BJ (cell line): ENCODE measurements at regions of chr6 and their contacts with region 1.

Region 1: GRCh38 chr6:44074439-44075136 is 52.7 kb downstream of the MRPL14 start:
- DNase-seq: no peak
- H3K4me3 ChIP-seq: no peak overlapping the region
- H3K27me3 ChIP-seq: no peaks in the 10 kb centered on the region
- CTCF ChIP-seq: peak; percentile 93

Region 2: GRCh38 chr6:42831237-42831636 is 1243.4 kb before region 1 on chr6:
- CTCF ChIA-PET with region 1: no interaction called
- POLR2A ChIA-PET with region 1: no interaction called
- DNase-seq: no peak
- H3K4me3 ChIP-seq: no peak overlapping the region
- H3K27me3 ChIP-seq: no peaks in the 10 kb centered on the region
- CTCF ChIP-seq: no peak

Region 3: DNA sequence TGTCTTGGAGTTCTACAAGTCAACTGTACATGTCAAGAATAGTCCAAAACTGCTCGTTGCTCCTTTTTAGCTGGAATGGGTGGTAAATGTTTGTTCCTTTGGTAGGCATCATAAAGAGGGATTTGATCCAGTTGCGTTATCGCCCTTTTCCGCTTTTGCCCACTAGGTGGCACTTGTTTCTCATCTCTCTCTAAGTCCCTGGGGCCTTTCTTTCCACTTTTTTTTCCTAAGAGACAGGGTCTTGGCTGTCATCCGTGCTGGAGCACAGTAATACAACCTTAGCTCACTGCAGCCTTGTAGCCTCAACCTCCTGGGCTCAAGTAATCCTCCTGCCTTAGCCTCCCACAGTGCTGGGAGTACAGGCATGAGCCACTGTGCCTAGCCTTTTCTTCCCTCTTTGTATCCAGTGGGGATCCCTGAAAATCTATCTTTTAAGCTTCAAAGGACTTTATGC is 466.3 kb before region 1 on chr6:
- CTCF ChIA-PET with region 1: interaction called, 17 read pairs
- POLR2A ChIA-PET with region 1: no interaction called
- DNase-seq: no peak
- H3K4me3 ChIP-seq: no peak overlapping the region
- H3K27me3 ChIP-seq: no peaks in the 10 kb centered on the region
- CTCF ChIP-seq: peak; percentile 85

Region 4: GRCh38 chr6:43723737-43724295 is 350.8 kb before region 1 on chr6:
- CTCF ChIA-PET with region 1: interaction called, 37 read pairs
- POLR2A ChIA-PET with region 1: no interaction called
- DNase-seq: no peak
- H3K4me3 ChIP-seq: no peak overlapping the region
- H3K27me3 ChIP-seq: peaks cover 7% of the 10 kb centered on the region
- CTCF ChIP-seq: peak; percentile 59

Region 5: DNA sequence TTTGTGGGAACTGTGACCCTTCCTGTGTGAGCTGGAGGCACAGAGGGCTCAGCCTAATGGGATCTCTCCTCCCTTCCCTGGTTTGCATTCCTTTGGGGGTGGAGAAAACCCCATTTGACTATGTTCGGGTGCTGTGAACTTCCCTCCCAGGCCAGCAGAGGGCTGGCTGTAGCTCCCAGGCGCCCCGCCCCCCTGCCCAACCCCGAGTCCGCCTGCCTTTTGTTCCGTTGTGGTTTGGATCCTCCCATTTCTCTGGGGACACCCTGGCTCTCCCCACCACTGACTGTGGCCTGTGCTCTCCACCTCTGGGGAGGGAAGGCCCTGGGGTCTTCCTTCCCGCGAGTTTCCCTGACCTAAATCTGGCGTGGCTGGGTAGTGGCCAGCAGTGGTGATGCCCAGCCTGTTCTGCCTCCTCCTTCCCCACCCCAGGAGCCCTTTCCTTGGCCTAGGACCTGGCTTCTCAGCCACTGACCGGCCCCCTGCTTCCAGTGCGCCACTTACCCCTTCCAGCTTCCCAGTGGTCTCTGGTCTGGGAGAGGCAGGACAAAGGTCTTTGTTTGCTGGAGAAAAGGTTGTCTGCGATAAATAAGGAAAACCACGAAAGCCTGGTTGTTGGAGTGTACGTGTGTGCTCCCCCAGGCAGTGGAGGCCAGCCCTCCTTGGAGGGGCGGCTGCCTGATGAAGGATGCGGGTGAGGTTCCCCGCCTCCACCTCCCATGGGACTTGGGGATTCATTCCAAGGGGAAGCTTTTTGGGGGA is 299.6 kb before region 1 on chr6:
- CTCF ChIA-PET with region 1: interaction called, 338 read pairs
- POLR2A ChIA-PET with region 1: interaction called, 9 read pairs
- DNase-seq: no peak
- H3K4me3 ChIP-seq: peak overlapping the region; percentile 94
- H3K27me3 ChIP-seq: no peaks in the 10 kb centered on the region
- CTCF ChIP-seq: peak; percentile 97

Region 6: GRCh38 chr6:43990627-43991619 is 83.7 kb before region 1 on chr6:
- CTCF ChIA-PET with region 1: interaction called, 20 read pairs
- POLR2A ChIA-PET with region 1: no interaction called
- DNase-seq: no peak
- H3K4me3 ChIP-seq: no peak overlapping the region
- H3K27me3 ChIP-seq: no peaks in the 10 kb centered on the region
- CTCF ChIP-seq: no peak

Region 7: GRCh38 chr6:44010411-44011349 is 63.9 kb before region 1 on chr6:
- CTCF ChIA-PET with region 1: interaction called, 27 read pairs
- POLR2A ChIA-PET with region 1: no interaction called
- DNase-seq: peak; percentile 78
- H3K4me3 ChIP-seq: no peak overlapping the region
- H3K27me3 ChIP-seq: no peaks in the 10 kb centered on the region
- CTCF ChIP-seq: no peak

Region 8: DNA sequence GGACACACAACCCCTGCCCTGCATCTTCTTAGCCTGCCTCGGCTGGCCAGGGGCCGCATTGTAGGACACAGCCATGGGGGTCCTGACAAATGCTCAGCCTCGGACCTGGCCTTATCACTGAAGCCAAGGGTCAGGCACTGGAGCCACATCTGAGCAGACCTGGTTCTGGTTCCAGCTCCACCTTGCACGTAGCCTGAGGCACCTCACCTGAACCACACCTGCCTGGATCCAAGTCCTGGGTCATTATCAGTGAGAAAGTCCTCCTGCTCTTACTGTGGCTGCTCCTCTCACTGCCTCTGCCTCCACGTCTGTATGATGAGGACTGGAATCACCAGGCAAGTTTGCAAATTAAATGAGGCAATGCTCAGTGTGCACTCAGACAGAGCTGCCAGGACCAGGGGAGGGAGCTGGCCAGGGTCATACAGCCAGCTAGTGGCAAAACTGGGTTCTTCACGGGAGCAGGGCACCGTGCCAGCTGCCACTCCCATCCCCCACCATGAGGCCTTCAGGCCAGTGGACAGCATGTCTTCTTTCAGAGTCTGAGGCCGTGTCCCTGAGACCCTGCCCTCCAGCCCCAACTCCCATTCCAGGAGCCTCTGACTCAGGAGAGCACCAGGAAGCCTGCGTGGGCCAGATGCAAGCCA is 12.5 kb after region 1 on chr6:
- CTCF ChIA-PET with region 1: interaction called, 13 read pairs
- POLR2A ChIA-PET with region 1: no interaction called
- DNase-seq: no peak
- H3K4me3 ChIP-seq: no peak overlapping the region
- H3K27me3 ChIP-seq: no peaks in the 10 kb centered on the region
- CTCF ChIP-seq: no peak

Region 9: DNA sequence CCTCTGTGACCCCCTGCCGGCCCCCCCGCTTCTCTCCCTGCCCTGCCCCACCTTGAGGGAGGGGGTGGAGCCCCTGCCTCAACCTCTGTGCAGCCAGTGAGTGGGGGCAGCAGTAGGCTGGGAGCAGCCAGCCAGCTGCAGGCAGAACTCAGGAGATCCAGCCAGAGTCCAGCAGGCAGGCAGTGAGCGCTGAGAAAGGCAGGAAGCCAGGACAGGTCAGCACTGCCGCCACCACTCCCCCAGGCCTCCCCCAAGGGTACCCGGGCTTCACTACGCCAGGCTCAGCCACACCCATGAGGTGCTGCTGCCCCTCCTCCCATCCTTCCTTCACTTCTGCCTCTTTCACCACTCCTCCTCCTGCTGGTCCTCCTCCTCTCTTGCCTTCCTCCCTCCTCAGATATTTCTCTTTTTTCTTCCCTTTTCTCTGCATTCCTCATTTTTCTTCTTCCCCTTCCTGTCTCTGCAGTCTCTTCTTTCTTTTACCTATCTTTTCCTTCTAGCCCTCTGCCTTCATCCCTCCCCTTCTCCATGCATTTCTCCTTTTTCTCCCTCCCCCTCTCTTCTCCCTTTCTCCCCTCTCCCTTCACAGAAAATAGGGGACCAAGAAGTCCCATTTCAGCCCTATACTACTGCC is 64.2 kb after region 1 on chr6:
- CTCF ChIA-PET with region 1: no interaction called
- POLR2A ChIA-PET with region 1: no interaction called
- DNase-seq: no peak
- H3K4me3 ChIP-seq: no peak overlapping the region
- H3K27me3 ChIP-seq: no peaks in the 10 kb centered on the region
- CTCF ChIP-seq: no peak